Activated T-helper 2 cell treated with anti-CD3 and anti-CD28 coated beads, Interferon-gamma antibody, Interleukin-2, Interleukin-4, amounts not matched to agents 10 μg/mL and 5 μg/mL and 100 μg/mL, durations not matched to agents 14 hours and 24 hours and 36 hours (primary cell): ENCODE measurements at regions of chr6 and their contacts with region 1.

Region 1: DNA sequence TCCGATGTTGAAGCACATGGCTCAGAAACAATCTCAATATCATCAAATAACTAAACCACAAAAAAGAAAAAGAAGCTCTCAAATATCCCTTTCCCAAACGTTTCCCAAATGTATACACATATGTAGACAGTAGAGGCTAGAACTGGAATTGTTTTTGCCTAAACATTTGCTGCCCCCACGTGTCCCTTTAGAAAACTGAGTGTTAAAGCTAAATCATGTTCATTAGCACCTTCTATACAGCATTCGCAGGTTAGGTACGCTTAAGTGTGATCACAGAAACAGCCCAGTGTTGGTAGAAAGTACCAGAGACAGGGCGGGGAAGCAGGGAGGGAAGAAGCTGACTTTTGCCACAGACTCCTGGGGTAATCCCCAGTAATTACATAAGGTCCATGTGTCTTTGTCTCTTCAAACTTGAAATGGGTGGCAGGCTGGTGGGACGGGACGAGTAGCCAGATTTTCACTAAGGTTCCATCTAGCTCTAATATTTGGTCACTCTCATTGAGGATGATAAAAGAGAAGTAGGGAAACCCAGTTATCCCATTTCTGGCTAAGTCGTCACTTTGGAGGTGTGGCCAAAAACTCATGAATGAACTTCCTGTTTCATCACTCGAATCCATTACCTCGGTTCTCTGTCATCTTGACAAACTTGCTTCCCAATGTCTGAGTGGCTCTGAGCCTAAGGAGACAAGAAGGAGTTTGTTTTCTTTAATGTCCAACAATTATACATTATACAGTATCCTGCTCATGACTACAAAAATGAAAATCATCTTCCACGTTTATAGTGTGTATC is 15.0 kb upstream of the TFAP2A start:
- DNase-seq: no peak
- H3K4me3 Mint-ChIP-seq: peak overlapping the region; percentile 7
- H3K27ac Mint-ChIP-seq: no peak overlapping the region
- H3K4me1 Mint-ChIP-seq: peaks cover 15% of the 10 kb centered on the region
- H3K27me3 Mint-ChIP-seq: peaks cover 46% of the 10 kb centered on the region

Region 2: GRCh38 chr6:8983188-8983688 is 1446.6 kb before region 1 on chr6:
- intact Hi-C with region 1: loop called (anchors 5 kb)
- DNase-seq: peak; percentile 36
- H3K4me3 Mint-ChIP-seq: no peak overlapping the region
- H3K27ac Mint-ChIP-seq: no peak overlapping the region
- H3K4me1 Mint-ChIP-seq: peaks cover 4% of the 10 kb centered on the region
- H3K27me3 Mint-ChIP-seq: peaks cover 6% of the 10 kb centered on the region

Region 3: DNA sequence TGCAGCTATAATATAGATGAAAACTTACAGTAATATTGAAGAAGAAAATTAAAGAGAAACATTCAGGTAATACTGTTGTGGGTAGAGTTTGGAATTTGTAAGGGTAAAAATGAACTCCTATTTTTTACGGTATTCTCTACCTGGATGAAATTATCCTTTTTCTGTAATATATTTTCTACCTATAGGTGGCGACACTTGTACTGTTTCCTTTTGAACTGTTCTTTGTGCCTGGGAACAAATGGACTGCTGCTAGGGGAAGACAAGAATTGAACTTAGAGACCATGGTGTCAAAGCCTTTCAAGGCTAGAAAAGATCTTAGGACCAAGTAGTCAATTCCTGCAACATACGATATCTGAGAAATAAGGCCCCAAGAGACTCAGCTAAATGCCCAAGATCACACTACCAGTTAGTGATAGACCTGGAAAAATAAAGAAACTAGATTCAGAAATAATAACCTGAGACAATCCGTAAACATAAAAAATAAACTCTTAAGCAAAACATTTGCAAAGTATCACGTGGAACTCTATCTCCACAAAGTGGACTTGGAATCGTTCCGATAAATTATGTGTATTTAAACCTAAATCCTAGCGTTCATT is 398.8 kb before region 1 on chr6:
- intact Hi-C with region 1: loop called (anchors 5 kb)
- DNase-seq: no peak
- H3K4me3 Mint-ChIP-seq: no peak overlapping the region
- H3K27ac Mint-ChIP-seq: no peak overlapping the region
- H3K4me1 Mint-ChIP-seq: no peaks in the 10 kb centered on the region
- H3K27me3 Mint-ChIP-seq: no peaks in the 10 kb centered on the region

Region 4: GRCh38 chr6:10256113-10256690 is 173.6 kb before region 1 on chr6:
- intact Hi-C with region 1: loop called (anchors 10 kb)
- DNase-seq: no peak
- H3K4me3 Mint-ChIP-seq: no peak overlapping the region
- H3K27ac Mint-ChIP-seq: no peak overlapping the region
- H3K4me1 Mint-ChIP-seq: no peaks in the 10 kb centered on the region
- H3K27me3 Mint-ChIP-seq: no peaks in the 10 kb centered on the region

Region 5: GRCh38 chr6:10395171-10395941 is 34.5 kb before region 1 on chr6:
- intact Hi-C with region 1: no loop called
- DNase-seq: no peak
- H3K4me3 Mint-ChIP-seq: no peak overlapping the region
- H3K27ac Mint-ChIP-seq: no peak overlapping the region
- H3K4me1 Mint-ChIP-seq: no peaks in the 10 kb centered on the region
- H3K27me3 Mint-ChIP-seq: peaks cover 88% of the 10 kb centered on the region

Region 6: DNA sequence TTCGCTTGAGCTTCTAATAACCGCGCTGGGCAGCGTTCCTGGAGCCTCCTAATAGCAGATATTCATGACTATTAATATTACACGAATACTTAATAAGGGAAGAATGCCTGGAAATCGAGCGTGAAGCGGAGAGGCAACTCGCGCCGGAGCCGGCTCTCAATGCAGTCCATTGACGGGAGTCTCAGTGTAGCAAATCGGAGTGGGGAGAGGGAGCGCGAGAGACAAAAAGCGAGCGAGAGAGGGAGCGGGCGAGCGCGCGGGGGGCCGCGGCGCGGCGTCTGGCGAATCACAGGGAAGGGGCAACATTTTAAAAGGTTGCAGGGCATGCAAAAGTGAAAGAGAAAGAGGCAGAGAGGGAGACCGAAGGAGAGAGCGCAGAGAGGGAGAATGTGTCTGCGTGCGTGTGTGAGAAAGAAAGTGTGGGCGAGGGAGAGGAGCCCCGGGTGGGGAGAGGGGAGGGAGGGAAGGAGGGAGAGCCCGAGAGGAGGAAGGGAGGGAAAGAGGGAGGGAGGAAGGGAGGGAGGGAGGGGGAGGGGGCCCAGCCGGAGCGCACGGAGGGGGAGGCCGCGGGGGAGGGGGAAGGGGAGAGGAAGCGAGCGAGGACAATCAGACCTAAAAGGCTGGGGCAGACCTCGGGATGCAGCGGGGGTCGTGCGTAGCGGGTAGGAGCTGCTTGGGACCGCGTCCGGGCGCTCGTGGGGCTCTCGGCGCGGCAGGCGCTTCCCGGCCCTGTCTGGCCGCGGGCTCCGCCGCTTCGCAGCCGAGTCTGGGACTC is 17.7 kb before region 1 on chr6:
- intact Hi-C with region 1: loop called (anchors 2 kb)
- DNase-seq: peak; percentile 47
- H3K4me3 Mint-ChIP-seq: peak overlapping the region; percentile 88
- H3K27ac Mint-ChIP-seq: peak overlapping the region; percentile 81
- H3K4me1 Mint-ChIP-seq: peaks cover 28% of the 10 kb centered on the region
- H3K27me3 Mint-ChIP-seq: peaks cover 88% of the 10 kb centered on the region

Region 7: GRCh38 chr6:10555625-10556309 is 125.9 kb after region 1 on chr6:
- intact Hi-C with region 1: no loop called
- DNase-seq: no peak
- H3K4me3 Mint-ChIP-seq: no peak overlapping the region
- H3K27ac Mint-ChIP-seq: no peak overlapping the region
- H3K4me1 Mint-ChIP-seq: no peaks in the 10 kb centered on the region
- H3K27me3 Mint-ChIP-seq: no peaks in the 10 kb centered on the region

Region 8: GRCh38 chr6:11043961-11044711 is 614.3 kb after region 1 on chr6 and contains the start of gene ELOVL2:
- intact Hi-C with region 1: loop called (anchors 10 kb)
- DNase-seq: no peak
- H3K4me3 Mint-ChIP-seq: peak within 1 kb of the TSS; percentile 73
- H3K27ac Mint-ChIP-seq: no peak within 1 kb of the TSS
- H3K4me1 Mint-ChIP-seq: peaks cover 7% of the 10 kb centered on the region
- H3K27me3 Mint-ChIP-seq: peaks cover 68% of the 10 kb centered on the region
- total RNA-seq, gene ELOVL2: not detected in 2 replicates